Esophagus muscularis mucosa (tissue), 4 donors: ENCODE measurements at regions of chr6 and their contacts with region 1.

Region 1: GRCh38 chr6:11241793-11242201 is 9.3 kb upstream of the NEDD9 start:
- DNase-seq: no peak
- H3K4me3 ChIP-seq: no peak overlapping the region
- H3K27ac ChIP-seq: no peak overlapping the region
- H3K4me1 ChIP-seq: peaks cover 0 to 16% (median 12%) of the 10 kb centered on the region in 4 donors
- H3K27me3 ChIP-seq: no peaks in the 10 kb centered on the region
- CTCF ChIP-seq: peak in 1 of 3 experiments; percentile 44
- EP300 ChIP-seq: no peak
- POLR2A ChIP-seq: no peak

Region 2: DNA sequence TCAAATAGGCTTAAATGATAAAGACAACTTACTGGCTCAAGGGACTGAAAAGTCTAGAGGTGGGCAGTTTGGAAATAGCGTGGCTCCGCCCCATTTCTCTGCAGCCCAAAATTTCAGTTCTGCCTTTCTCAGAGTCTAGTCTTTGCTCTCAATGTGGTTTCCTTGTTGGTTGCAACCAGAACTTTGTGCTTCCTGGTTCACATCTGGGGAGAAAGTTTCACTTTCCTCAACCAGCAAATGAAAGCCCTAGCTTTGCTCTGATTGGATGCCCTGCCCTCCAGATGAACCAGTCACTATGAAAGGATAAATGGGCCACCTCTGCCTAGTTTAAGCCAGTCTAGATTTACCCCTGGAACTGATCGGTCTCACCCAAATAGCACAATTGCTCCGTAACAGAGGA is 340.0 kb before region 1 on chr6:
- intact Hi-C with region 1: no loop called
- DNase-seq: no peak
- H3K4me3 ChIP-seq: no peak overlapping the region
- H3K27ac ChIP-seq: no peak overlapping the region
- H3K4me1 ChIP-seq: no peaks in the 10 kb centered on the region
- H3K27me3 ChIP-seq: no peaks in the 10 kb centered on the region
- CTCF ChIP-seq: no peak
- EP300 ChIP-seq: no peak
- POLR2A ChIP-seq: no peak

Region 3: DNA sequence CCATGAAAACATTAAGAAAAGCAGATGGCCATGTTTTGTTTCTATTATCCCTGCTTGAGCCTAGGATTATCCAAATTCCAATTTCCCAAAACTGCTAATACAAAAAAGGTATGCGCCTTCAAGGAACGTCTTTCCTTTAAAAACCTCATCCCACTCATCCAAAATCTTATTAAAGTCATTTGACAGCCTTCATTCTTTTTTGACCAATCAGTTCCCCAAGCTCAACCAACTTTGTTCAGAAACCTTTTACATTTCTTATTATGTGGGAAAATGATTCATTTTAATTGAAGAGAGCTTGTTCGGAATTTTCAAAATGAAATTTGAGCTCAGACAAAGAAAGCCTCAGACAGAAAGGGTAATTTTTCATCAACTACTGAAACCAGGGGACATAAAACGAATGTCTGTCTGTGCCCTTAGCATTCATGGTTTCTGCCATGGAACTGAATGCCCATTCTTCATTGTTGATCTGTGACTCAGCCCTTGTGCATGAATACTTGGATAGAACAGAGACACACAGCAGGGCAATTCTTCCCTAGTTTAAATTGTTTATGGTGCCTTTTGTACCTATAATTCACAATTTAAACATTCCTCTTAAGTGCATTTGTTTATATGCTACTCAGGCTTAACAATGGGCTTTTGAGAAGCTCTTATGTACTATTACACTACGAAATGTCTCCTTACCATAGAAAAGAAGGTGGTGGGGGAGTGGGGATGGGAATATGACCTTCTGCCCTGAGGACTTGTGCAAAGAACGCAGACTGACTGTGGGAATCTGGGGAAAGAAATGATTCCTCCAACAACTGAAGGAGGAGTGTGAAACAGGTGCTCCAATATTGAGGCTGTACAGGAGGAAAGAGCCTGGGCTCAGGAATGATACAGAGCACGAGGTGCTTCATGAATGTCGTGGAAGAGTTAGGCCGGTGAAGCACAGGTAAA is 80.5 kb before region 1 on chr6:
- intact Hi-C with region 1: loop called (anchors 10 kb)
- DNase-seq: no peak
- H3K4me3 ChIP-seq: no peak overlapping the region
- H3K27ac ChIP-seq: no peak overlapping the region
- H3K4me1 ChIP-seq: no peaks in the 10 kb centered on the region
- H3K27me3 ChIP-seq: no peaks in the 10 kb centered on the region
- CTCF ChIP-seq: no peak
- EP300 ChIP-seq: no peak
- POLR2A ChIP-seq: no peak